ENCODE measurements at regions of chr22 and their contacts with region 1.

Region 1: DNA sequence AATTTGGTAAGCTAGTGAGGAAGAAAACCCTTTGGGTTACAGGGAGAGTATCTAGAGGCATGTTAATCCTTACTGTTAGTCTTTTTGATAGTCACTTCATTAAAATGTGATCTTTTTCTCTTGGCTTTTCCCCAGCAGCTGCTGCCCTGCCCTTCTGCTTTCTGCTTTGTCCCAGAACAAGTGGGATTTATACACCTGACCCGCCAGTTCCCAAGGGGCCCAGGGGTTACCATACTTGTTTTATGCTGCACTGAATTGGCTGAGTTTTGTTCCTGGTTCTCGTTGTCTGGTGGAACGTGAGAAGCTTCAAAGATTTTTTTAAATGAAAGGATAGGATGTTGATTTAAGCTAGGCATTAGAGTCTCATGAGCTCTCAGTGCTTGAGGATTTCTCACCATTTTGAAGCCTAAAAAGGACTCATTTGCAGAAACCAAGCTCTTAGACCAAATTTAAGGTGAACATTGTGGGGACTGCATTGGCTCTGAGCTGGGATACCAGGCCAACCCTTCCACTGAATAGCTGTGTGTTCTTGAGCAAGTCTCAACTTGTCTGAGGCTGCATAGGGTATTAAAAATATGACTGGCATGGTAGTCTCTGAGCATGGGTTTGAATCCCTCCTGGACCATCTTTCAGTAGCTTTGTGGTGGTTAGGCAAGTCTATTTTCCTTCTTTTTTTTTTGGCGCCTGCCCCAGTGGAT is 6.6 kb downstream of the LIMK2 start:
- DNase-seq: peak; percentile 39
- H3K4me3 Mint-ChIP-seq: no peak overlapping the region
- H3K27ac Mint-ChIP-seq: peak overlapping the region; percentile 94
- H3K4me1 Mint-ChIP-seq: peaks cover 16% of the 10 kb centered on the region
- H3K27me3 Mint-ChIP-seq: no peaks in the 10 kb centered on the region
- CTCF ChIP-seq: no peak

Region 2: GRCh38 chr22:31206906-31207678 is 11.6 kb before region 1 on chr22:
- CTCF ChIA-PET with region 1: interaction called, 30 read pairs
- POLR2A ChIA-PET with region 1: interaction called, 14 read pairs
- intact Hi-C with region 1: no loop called
- DNase-seq: peak; percentile 42
- H3K4me3 Mint-ChIP-seq: no peak overlapping the region
- H3K27ac Mint-ChIP-seq: peak overlapping the region; percentile 75
- H3K4me1 Mint-ChIP-seq: peaks cover 16% of the 10 kb centered on the region
- H3K27me3 Mint-ChIP-seq: no peaks in the 10 kb centered on the region
- CTCF ChIP-seq: no peak

Region 3: GRCh38 chr22:31461699-31462098 is 243.0 kb after region 1 on chr22:
- CTCF ChIA-PET with region 1: no interaction called
- POLR2A ChIA-PET with region 1: no interaction called
- intact Hi-C with region 1: no loop called
- DNase-seq: no peak
- H3K4me3 Mint-ChIP-seq: no peak overlapping the region
- H3K27ac Mint-ChIP-seq: no peak overlapping the region
- H3K4me1 Mint-ChIP-seq: no peaks in the 10 kb centered on the region
- H3K27me3 Mint-ChIP-seq: no peaks in the 10 kb centered on the region
- CTCF ChIP-seq: no peak

Region 4: DNA sequence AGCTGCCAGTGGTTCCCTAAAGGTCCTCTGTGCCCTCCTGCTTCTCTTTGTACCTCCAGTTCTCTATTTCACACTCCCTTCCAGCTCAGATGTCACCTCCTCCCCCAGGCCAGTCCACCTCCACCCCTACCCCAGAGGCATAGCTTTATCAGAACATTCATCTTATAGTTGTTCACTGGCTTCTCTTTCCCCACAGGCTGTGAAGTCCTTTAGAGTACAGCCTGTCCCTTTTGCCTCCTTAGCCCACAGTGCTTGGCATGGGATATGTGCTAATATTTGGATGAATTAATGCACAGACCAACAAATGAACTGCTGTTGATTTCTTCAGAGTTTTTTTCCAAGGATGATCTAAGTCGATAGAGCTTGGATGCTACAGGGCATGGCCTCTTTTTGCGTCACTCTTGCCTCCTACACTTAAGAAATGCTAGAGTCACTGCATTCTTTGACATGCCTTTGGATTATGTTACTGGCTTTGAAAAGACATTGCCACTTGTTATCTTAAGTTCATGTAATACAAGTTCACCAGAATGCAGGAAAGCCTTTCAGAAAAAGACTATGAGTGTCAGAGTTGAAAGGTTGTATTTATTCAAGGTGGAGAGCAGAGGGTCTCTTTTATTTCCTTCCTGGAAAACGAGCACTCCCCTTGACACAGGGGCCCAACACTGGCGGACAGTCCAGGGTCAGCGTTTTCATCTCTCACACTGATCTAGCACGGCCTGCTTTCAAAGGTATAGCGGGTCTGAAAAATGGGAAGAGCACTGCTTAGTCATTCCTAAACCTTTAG is 367.6 kb after region 1 on chr22:
- CTCF ChIA-PET with region 1: no interaction called
- POLR2A ChIA-PET with region 1: no interaction called
- intact Hi-C with region 1: no loop called
- DNase-seq: peak; percentile 52
- H3K4me3 Mint-ChIP-seq: no peak overlapping the region
- H3K27ac Mint-ChIP-seq: no peak overlapping the region
- H3K4me1 Mint-ChIP-seq: peaks cover 6% of the 10 kb centered on the region
- H3K27me3 Mint-ChIP-seq: no peaks in the 10 kb centered on the region
- CTCF ChIP-seq: no peak